Activated CD8-positive, alpha-beta T cell treated with anti-CD3 and anti-CD28 coated beads, Interleukin-2, amount 10 ng/mL, durations not matched to agents 7 days and 5 days (primary cell): ENCODE measurements at regions of chr19 and their contacts with region 1.

Region 1: DNA sequence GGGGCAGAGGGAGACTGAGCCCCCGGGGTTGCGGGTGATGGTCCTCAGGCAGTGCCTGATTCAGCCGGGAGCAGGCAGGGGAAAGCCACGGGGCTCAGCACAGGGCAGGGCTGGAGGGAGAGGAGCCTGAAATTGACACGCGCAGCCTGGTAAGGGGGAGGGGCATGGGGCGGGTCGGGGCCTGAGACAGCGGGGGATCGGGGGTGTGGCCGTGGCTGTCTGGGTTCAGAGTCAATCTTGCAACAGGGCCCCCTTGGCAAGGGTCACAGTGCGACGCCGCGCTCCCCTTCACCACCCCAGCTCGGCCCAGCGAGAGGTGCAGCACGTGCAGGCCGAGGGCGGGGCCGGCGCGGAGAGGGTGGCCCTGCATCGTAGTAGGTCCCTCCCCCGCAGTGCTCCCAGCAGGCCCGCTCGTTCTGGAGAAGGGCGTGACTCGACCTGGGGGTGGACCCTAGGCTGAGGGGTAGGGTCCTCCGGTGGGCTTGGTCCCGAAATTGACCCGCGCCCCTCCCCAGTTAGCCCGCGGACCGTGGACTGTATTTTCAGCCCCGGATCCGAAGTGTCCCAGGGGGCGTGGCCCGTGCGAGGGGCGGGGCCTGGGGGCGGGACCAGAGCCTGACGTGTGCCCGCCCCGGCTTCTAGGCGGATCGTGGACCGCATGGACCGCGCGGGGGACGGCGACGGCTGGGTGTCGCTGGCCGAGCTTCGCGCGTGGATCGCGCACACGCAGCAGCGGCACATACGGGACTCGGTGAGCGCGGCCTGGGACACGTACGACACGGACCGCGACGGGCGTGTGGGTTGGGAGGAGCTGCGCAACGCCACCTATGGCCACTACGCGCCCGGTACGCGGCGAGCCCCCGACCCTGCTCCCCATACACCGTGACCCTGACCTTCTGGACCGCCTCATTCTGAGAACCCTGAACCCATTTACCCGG is 6.0 kb downstream of the RCN3 start:
- DNase-seq: peak; percentile 84
- ATAC-seq: peak; percentile 95
- H3K4me3 Mint-ChIP-seq: peak overlapping the region; percentile 71
- H3K27ac Mint-ChIP-seq: peak overlapping the region; percentile 77
- H3K4me1 Mint-ChIP-seq: peaks cover 30% of the 10 kb centered on the region
- H3K27me3 Mint-ChIP-seq: peaks cover 10% of the 10 kb centered on the region

Region 2: DNA sequence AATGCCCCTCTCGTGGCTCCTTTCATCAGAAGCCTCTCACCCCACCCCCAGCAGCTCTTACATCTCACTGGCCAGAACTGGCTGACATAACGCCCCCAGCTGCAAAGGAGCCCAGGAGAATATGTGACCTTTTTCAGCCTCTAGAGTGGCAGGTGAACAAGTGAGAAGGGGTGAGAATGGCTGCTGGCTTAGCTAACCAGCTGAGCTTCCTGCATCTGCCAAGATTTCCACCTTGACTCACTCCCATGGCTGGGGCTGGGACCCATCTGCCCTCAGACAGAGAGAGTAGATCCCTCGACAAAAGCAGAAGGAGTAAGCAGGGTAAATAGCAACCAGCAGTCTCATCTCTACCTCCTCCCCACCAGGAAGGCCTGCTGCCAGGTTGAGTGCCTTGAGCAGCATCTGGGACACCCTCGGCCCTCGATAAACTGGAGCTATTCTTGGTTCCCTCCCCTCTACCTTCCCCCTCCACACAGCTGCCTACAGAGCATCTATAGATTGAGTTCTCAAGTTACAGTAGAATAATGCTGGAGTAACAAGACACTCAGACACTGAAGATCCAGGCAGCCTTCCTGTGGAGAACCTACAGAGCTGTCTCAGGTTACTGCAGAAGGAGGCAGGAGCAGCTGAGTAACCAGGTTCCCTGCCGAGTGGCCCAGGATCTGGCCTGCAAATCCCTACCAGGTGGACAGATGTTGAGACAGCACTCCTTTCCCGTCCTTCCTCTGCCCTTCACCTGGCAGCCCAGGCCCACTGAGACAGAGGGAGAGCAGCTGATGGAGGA is 130.2 kb before region 1 on chr19:
- CTCF ChIA-PET with region 1: no interaction called
- POLR2A ChIA-PET with region 1: no interaction called
- DNase-seq: no peak
- ATAC-seq: no peak
- H3K4me3 Mint-ChIP-seq: no peak overlapping the region
- H3K27ac Mint-ChIP-seq: no peak overlapping the region
- H3K4me1 Mint-ChIP-seq: peaks cover 30% of the 10 kb centered on the region
- H3K27me3 Mint-ChIP-seq: peaks cover under 1% of the 10 kb centered on the region

Region 3: GRCh38 chr19:49560358-49560900 is 26.6 kb after region 1 on chr19:
- CTCF ChIA-PET with region 1: interaction called, 10 read pairs
- POLR2A ChIA-PET with region 1: no interaction called
- DNase-seq: peak; percentile 51
- ATAC-seq: peak; percentile 20
- H3K4me3 Mint-ChIP-seq: peak overlapping the region; percentile 83
- H3K27ac Mint-ChIP-seq: peak overlapping the region; percentile 89
- H3K4me1 Mint-ChIP-seq: peaks cover 86% of the 10 kb centered on the region
- H3K27me3 Mint-ChIP-seq: no peaks in the 10 kb centered on the region

Region 4: GRCh38 chr19:49580264-49581006 is 46.6 kb after region 1 on chr19 and contains the start of gene NOSIP:
- CTCF ChIA-PET with region 1: interaction called, 11 read pairs
- POLR2A ChIA-PET with region 1: interaction called, 4 read pairs
- DNase-seq: peak; percentile 98
- ATAC-seq: peak; percentile 97
- H3K4me3 Mint-ChIP-seq: peak within 1 kb of the TSS; percentile 96
- H3K27ac Mint-ChIP-seq: peak within 1 kb of the TSS; percentile 91
- H3K4me1 Mint-ChIP-seq: peaks cover 33% of the 10 kb centered on the region
- H3K27me3 Mint-ChIP-seq: no peaks in the 10 kb centered on the region
- total RNA-seq, gene NOSIP: 147 to 159 TPM

Region 5: GRCh38 chr19:49601482-49602038 is 67.7 kb after region 1 on chr19:
- CTCF ChIA-PET with region 1: no interaction called
- POLR2A ChIA-PET with region 1: no interaction called
- DNase-seq: no peak
- ATAC-seq: no peak
- H3K4me3 Mint-ChIP-seq: no peak overlapping the region
- H3K27ac Mint-ChIP-seq: no peak overlapping the region
- H3K4me1 Mint-ChIP-seq: peaks cover 4% of the 10 kb centered on the region
- H3K27me3 Mint-ChIP-seq: no peaks in the 10 kb centered on the region